Posterior vena cava (tissue), 2 donors: ENCODE measurements at regions of chr2 and their contacts with region 1.

Region 1: GRCh38 chr2:26942543-26943295 is 27.7 kb upstream of the MAPRE3 start:
- DNase-seq: peak; percentile 86

Region 2: GRCh38 chr2:26846328-26847306 is 96.1 kb before region 1 on chr2:
- intact Hi-C with region 1: loop called (anchors 2 to 5 kb)
- DNase-seq: peak; percentile 90

Region 3: DNA sequence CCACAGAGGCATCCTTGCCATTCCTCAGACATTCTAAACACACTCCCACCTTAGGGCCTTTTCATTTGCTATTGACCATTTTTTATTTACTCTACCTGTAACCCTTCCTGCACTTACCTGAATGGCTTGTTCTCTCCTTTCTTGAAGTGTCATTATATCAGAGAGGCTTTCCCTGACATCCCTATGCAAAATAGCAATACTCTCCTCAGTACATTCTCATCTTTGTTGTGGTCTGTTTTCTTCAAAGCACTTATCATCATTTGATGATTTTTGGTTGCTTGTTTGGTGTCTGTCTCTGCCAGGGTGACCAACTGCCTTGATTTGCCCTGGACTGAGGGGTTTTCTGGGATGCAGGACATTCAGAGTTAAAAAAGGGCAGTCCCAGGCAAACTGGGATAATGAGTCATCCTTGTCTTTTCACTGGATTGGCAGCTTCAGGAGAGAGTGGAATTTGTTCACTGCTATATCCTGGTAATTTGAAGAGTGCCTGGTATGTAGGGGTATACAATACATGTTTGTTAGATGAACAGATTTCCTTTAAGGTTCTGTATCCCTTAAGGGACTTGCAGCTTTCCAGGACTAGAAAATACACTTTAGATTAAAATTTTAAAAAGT is 1050.2 kb after region 1 on chr2:
- intact Hi-C with region 1: no loop called
- DNase-seq: no peak

Region 4: DNA sequence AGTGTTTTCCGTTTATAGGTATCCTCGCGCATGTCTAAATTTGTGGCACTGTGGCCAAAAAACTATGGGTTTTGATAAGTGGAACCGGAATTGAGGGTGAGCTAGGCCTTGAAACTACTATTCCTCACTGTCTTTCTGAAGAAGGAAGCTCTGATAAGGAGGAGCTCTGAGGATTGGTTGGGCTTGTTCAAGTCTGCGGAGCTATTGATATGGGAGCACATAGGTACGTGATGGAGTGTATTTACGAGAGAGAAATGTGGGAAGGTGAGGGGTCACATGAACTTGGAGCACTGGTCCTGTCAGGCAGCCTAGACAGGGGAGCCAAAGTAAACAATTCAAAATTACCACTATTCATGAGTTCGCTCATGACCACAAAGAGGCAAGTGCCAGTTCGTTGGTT is 1079.2 kb after region 1 on chr2:
- intact Hi-C with region 1: no loop called
- DNase-seq: no peak